ENCODE measurements at regions of chr5 and their contacts with region 1.

Region 1: GRCh38 chr5:39217365-39218281 is 1.7 kb downstream of the FYB1 start:
- DNase-seq: peak; percentile 87
- ATAC-seq: peak; percentile 74
- H3K4me3 Mint-ChIP-seq: peak overlapping the region; percentile 77
- H3K27ac Mint-ChIP-seq: peak overlapping the region; percentile 97
- H3K4me1 Mint-ChIP-seq: peaks cover 86% of the 10 kb centered on the region
- H3K27me3 Mint-ChIP-seq: no peaks in the 10 kb centered on the region

Region 2: GRCh38 chr5:39164529-39165402 is 52.9 kb before region 1 on chr5:
- CTCF ChIA-PET with region 1: interaction called, 24 read pairs
- POLR2A ChIA-PET with region 1: interaction called, 3 read pairs
- intact Hi-C with region 1: loop called in 1 of 2 experiments (anchors 2 kb)
- DNase-seq: peak; percentile 36
- ATAC-seq: peak; percentile 94
- H3K4me3 Mint-ChIP-seq: peak overlapping the region; percentile 51
- H3K27ac Mint-ChIP-seq: peak overlapping the region; percentile 97
- H3K4me1 Mint-ChIP-seq: peaks cover 90% of the 10 kb centered on the region
- H3K27me3 Mint-ChIP-seq: no peaks in the 10 kb centered on the region

Region 3: DNA sequence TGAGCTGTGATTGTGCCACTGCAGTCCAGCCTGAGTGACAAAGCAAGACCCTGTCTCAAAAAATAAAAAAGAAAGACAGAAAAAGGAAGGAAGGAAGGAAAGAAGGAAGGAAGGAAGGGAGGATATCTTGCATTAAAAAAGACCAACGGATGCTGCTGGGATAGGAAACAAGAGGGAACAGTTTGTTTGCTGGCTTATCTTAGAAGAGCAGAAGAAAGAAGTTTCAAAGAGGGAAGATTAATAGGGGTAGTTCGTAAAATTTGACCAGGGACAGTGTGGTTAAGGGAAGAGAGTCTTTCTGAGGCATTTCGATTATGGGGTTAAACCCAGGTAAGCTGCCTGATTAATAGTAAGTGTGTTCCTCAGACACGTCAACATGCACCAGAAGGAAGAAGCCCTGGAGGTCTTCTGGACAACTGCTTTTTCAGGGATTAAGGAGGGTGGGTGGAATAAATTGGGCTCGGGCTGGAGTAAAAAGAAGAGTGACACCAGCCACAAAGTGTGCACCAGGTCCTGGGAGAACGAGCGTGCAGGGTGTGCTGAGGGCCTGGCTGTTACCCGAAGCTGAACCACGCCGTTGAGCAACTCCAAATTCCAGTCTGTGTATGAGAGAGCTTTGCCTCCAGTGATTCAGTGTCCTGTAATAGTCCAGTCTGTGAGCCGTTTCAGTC is 23.0 kb before region 1 on chr5:
- CTCF ChIA-PET with region 1: interaction called, 52 read pairs
- POLR2A ChIA-PET with region 1: interaction called, 7 read pairs
- intact Hi-C with region 1: no loop called
- DNase-seq: peak; percentile 52
- ATAC-seq: peak; percentile 24
- H3K4me3 Mint-ChIP-seq: peak overlapping the region; percentile 72
- H3K27ac Mint-ChIP-seq: peak overlapping the region; percentile 96
- H3K4me1 Mint-ChIP-seq: peaks cover 74% of the 10 kb centered on the region
- H3K27me3 Mint-ChIP-seq: no peaks in the 10 kb centered on the region

Region 4: DNA sequence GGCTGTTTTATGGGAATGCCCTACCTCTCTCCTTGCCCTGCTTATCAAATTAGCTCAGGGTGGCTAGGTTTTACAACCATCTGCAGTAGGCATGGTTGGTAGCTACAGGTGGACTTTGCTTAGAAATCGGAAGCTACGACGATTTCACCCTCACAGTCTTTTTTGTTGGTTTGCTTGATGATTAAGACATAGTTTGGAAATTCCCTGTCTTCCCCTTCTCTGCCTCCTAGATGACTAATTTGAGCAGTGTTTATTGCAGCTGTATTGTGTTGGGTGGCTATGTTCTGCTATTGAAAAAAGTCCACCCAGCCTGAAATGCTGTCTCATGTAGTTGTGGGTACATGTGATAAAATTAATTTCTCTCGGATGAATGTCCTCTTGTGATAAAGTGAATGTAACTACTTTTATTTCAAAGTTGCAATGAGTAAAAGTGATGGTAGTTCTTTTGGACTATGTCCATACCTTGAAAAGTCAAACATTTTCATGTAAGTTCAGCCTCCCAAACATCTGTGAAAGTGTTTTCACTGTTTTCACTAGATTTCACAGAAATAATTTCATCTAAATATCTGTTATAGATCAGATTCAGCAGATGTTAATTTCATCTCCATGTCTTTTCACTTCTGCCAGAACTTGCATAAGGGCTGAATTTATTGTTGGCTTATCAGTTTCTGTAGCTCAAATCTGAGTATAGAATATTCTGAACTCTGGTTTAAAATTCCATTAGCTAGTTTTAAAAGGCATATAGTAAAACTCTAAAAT is 39.0 kb after region 1 on chr5:
- CTCF ChIA-PET with region 1: interaction called, 8 read pairs
- POLR2A ChIA-PET with region 1: no interaction called
- intact Hi-C with region 1: loop called in 1 of 2 experiments (anchors 1 kb)
- DNase-seq: no peak
- ATAC-seq: peak; percentile 93
- H3K4me3 Mint-ChIP-seq: no peak overlapping the region
- H3K27ac Mint-ChIP-seq: no peak overlapping the region
- H3K4me1 Mint-ChIP-seq: peaks cover 11% of the 10 kb centered on the region
- H3K27me3 Mint-ChIP-seq: no peaks in the 10 kb centered on the region

Region 5: DNA sequence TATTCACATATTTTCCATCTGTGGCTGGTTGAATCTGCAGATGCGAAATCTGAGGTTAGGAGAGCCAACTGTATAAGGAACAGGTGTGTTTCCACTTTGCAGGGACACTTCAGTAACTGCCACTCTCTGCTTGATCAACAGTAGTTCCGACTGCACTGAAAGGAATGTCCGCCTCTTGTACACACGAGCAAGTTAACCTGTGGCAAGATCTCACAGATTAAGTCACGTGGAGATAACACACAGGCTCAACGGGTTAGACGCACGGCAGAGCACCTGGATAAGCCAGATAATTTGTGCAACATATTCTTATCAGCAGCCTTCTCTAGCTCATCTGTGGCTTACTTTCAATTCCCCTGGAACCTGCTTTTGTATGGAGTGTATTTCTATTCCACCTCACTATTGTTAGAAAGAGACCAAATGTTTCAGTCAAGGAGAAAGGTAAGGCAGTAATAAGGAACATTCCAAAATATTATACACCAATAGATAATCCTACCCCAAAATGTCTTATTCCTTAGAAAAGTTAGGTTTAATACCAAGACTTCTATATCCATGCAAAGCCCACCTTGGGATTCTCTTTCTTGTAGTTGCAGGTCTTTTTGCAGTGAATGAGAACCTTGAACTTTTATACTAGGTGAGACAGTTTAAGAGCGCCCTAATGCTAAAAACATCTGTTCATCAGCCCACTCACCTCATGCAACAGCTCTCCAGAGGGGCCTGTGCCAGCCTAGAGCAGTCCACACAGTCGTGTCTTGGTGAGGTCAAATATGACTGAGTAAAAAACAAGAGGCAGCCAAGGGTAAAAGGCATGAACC is 153.1 kb after region 1 on chr5:
- CTCF ChIA-PET with region 1: interaction called, 7 read pairs
- POLR2A ChIA-PET with region 1: no interaction called
- intact Hi-C with region 1: loop called in 1 of 2 experiments (anchors 5 kb)
- DNase-seq: no peak
- ATAC-seq: no peak
- H3K4me3 Mint-ChIP-seq: no peak overlapping the region
- H3K27ac Mint-ChIP-seq: no peak overlapping the region
- H3K4me1 Mint-ChIP-seq: no peaks in the 10 kb centered on the region
- H3K27me3 Mint-ChIP-seq: no peaks in the 10 kb centered on the region